ENCODE measurements at regions of chr20 and their contacts with region 1.

Region 1: GRCh38 chr20:45890985-45891983 is at the starts of genes CTSA and NEURL2:
- DNase-seq: peak; percentile 96
- H3K4me3 ChIP-seq: peak within 1 kb of the TSS; percentile 68
- H3K27ac ChIP-seq: peak within 1 kb of the TSS; percentile 47 to 88
- H3K4me1 ChIP-seq: peaks cover 13% of the 10 kb centered on the region
- H3K27me3 ChIP-seq: no peaks in the 10 kb centered on the region
- CTCF ChIP-seq: peak in 1 of 3 experiments; percentile 8
- POLR2A ChIP-seq: no peak
- total RNA-seq, gene CTSA: 112 to 223 TPM
- total RNA-seq, gene NEURL2: 7.0 to 9.1 TPM

Region 2: DNA sequence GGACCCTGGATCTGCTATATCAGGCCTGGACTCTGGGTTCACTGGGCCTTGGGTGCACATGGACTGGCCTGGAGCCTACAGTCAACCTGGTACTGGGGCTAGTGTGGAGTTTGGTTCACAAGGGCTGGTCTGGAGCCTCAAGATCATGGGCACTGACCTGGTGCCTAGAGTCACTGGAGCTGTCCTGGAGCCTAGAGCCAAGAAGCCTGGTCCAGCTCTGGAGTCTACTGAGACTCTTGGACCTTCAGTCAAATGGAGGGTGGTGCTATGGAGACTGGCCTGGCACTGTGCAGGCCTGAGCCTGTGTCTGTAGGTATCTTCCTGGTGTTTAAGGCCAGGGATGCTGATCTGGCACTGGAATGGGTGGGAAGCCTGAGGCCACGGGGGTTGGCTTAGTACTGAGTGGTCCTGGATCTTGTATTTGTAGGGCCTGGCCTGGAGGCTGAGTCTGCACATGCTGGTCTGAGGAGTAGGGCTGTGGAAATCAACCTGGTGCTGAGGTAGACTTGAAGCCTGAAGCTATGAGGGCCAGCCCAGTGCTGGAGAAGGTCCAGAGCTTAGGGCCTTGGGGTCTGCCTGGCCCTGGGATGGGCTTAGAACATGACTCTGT is 243.7 kb before region 1 on chr20:
- intact Hi-C with region 1: no loop called
- DNase-seq: no peak
- H3K4me3 ChIP-seq: no peak overlapping the region
- H3K27ac ChIP-seq: no peak overlapping the region
- H3K4me1 ChIP-seq: no peaks in the 10 kb centered on the region
- H3K27me3 ChIP-seq: no peaks in the 10 kb centered on the region
- CTCF ChIP-seq: no peak
- POLR2A ChIP-seq: no peak

Region 3: GRCh38 chr20:45959956-45960630 is 68.8 kb after region 1 on chr20:
- intact Hi-C with region 1: loop called (anchors 10 kb)
- DNase-seq: no peak
- H3K4me3 ChIP-seq: no peak overlapping the region
- H3K27ac ChIP-seq: no peak overlapping the region
- H3K4me1 ChIP-seq: no peaks in the 10 kb centered on the region
- H3K27me3 ChIP-seq: no peaks in the 10 kb centered on the region
- CTCF ChIP-seq: no peak
- POLR2A ChIP-seq: no peak

Region 4: DNA sequence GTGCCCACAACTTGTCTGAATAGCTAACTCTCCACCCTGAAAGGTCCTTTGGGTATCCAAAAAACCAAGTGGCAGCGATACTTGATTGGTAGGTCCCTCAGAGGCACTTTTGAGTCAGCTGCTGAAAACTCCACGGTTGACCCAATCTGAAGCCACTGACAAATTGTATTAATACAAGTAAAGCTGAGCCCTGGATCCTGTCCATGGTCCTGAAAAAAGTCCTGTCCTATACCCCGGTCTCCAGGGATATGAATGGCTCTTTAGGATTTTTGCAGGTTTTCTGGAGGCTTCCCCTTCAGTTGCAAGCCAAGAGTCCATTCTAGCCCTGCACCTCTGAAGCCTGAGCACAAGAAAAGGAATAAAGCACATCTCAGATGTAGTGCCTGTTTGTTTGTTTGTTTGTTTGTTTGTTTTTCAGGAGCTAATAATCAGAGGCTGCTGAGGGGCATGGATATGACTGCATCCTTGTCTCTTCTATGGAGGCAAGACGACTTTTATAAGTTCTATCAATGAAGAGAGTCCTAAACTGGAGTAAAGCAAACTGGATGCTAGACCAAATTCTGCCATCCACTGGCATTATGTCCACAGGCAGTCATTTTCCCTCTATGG is 136.1 kb after region 1 on chr20:
- intact Hi-C with region 1: no loop called
- DNase-seq: peak; percentile 72
- H3K4me3 ChIP-seq: no peak overlapping the region
- H3K27ac ChIP-seq: no peak overlapping the region
- H3K4me1 ChIP-seq: peaks cover 4% of the 10 kb centered on the region
- H3K27me3 ChIP-seq: no peaks in the 10 kb centered on the region
- CTCF ChIP-seq: no peak
- POLR2A ChIP-seq: no peak

Measured in testis (tissue), 5 donors.